Vagina (tissue), 2 donors: ENCODE measurements at regions of chr21 and their contacts with region 1.

Region 1: DNA sequence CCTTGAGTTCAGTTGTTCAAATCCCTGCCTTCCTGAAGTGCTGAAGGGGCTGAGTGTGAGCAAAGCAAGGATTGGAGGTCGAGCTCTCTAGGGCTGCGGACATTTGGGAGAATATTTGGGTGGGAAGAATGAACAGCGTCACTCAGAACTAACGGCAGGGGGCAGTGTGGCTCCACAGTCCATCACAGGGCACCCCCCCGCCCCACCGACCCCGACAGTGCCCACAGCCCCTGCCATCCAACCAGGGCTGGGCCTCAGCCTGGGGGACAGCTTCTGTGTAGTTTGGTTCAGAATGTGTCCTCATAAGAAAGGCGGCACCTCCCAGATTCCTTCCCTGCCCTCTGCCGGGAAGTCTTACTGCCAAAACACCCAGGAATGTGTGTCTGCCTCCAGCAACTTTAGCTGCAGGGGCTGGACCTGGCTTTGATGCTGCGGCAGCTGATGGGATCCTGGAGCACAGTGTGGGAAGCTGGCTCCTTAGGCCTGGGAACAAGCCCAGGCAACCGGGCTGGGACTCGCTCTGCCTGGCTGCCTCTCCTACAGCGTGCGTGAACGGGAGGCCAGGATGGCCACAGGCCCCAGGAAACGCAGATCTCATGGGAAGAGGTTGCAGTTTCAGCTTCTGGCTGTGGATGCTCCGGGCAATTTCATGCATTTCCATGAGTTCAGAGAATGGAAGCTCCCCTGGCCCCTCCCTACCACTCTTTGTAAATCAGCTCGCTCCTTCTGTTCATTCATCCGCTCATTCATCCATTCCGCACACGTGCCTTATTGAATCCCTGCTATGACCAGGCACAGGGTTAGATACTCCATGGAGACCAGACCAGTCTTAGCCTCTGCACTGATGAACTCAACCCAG is 104.9 kb upstream of the TMPRSS2 start:
- DNase-seq: peak in 1 of 2 donors; percentile 97
- H3K4me3 ChIP-seq: peak overlapping the region in 1 of 2 donors; percentile 4
- H3K27ac ChIP-seq: peak overlapping the region; percentile 77
- H3K4me1 ChIP-seq: peaks cover 51% of the 10 kb centered on the region
- H3K27me3 ChIP-seq: no peaks in the 10 kb centered on the region
- CTCF ChIP-seq: peak; percentile 53 to 89 (median 81)
- POLR2A ChIP-seq: no peak

Region 2: GRCh38 chr21:41564871-41565274 is 48.0 kb before region 1 on chr21:
- intact Hi-C with region 1: no loop called
- DNase-seq: no peak
- H3K4me3 ChIP-seq: no peak overlapping the region
- H3K27ac ChIP-seq: no peak overlapping the region
- H3K4me1 ChIP-seq: no peaks in the 10 kb centered on the region
- H3K27me3 ChIP-seq: no peaks in the 10 kb centered on the region
- CTCF ChIP-seq: no peak
- POLR2A ChIP-seq: no peak

Region 3: DNA sequence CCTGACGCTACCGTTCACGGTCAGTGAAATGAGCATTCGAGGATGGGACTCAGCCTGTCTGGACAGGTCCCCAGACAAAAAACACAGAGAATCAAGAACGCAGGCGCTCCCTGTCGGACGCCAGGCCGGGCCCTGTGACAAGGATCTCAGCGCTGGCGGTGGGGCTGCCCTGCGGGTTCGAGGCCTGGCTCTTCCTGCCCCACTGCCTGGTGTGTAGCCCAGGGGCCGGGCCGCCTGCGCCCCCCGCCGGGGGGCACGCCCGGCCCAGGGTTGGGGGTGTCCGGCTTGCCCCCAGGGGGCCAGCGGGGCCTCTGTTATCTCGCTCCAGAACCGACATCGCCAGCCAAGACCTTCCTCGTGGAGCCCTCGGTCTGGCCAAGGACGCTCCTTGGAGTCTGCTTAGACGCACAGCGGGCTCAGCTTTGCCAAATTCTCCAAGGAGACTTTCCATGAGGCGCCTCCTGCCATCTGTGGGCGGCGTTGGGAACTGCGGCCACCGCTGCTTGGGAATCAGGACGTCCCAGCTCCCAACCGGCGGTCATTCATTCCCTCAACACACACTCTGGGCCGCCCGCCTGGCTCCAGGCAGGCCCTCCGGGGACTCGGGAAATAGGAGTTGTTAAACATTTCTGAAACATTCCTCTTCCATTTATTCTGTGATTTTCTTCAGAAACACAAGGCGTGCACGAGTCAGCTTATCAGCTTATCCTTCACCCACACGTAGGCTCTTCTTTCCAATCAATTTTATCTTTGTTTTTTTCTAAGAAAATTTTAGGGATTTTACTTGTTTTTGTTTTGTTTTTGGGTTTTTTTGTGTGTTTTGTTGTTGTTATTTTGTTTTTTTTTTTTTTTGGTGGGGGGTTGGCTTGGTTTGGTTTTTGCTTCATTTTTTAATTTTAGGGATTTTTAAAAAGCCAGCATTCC is 165.3 kb after region 1 on chr21:
- intact Hi-C with region 1: loop called (anchors 1 kb)
- DNase-seq: no peak
- H3K4me3 ChIP-seq: no peak overlapping the region
- H3K27ac ChIP-seq: peak overlapping the region; percentile 31
- H3K4me1 ChIP-seq: peaks cover 10% of the 10 kb centered on the region
- H3K27me3 ChIP-seq: no peaks in the 10 kb centered on the region
- CTCF ChIP-seq: peak; percentile 66 to 80 (median 79)
- POLR2A ChIP-seq: no peak

Region 4: GRCh38 chr21:41879190-41879998 is 266.5 kb after region 1 on chr21 and contains the start of gene PRDM15:
- intact Hi-C with region 1: loop called (anchors 2 kb)
- DNase-seq: no peak
- H3K4me3 ChIP-seq: peak within 1 kb of the TSS; percentile 81 to 88
- H3K27ac ChIP-seq: peak within 1 kb of the TSS; percentile 77
- H3K4me1 ChIP-seq: peaks cover 15% of the 10 kb centered on the region
- H3K27me3 ChIP-seq: no peaks in the 10 kb centered on the region
- CTCF ChIP-seq: no peak
- POLR2A ChIP-seq: no peak
- total RNA-seq, gene PRDM15: 31.2 TPM

Region 5: DNA sequence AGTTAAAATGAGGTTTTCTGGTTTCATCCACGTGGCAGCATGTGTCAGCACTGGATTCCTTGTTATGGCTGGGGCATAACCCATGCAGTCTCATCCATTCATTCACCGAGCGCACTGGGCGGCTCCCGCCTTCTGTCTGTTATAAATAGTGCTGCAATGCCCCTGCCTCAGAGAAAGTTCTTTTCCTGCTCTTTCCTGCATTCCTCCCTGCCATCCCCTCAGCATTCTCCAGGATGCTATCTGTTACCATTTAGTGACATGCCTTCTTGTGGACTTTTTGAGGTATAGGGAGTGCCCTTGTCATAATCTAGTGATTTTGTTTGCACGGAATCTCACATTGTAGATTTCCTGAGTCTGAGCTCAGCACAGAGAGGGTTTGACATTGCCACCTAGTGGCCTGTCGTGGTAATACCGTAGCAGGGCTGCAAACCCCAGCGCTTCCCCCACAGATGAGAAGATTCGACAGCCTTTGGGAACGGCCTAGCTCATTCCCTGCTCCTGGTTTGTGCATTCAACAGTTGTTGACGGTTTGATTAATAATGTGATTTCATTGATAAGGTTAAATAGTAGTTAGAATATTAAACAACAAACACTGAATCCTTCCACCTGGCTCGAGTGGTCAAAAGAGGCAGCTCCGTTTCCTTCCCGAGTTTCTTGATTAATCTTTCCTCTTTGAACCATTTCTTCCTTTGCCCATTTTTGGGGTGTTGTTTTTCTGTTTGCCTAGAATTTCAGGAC is 504.5 kb after region 1 on chr21:
- intact Hi-C with region 1: loop called (anchors 10 kb)
- DNase-seq: no peak
- H3K4me3 ChIP-seq: no peak overlapping the region
- H3K27ac ChIP-seq: peak overlapping the region; percentile 21
- H3K4me1 ChIP-seq: peaks cover 18% of the 10 kb centered on the region
- H3K27me3 ChIP-seq: no peaks in the 10 kb centered on the region
- CTCF ChIP-seq: peak; percentile 78 to 96 (median 93)
- POLR2A ChIP-seq: no peak

Region 6: GRCh38 chr21:43287111-43287759 is 1674.3 kb after region 1 on chr21:
- intact Hi-C with region 1: no loop called
- DNase-seq: no peak
- H3K4me3 ChIP-seq: no peak overlapping the region
- H3K27ac ChIP-seq: no peak overlapping the region
- H3K4me1 ChIP-seq: no peaks in the 10 kb centered on the region
- H3K27me3 ChIP-seq: no peaks in the 10 kb centered on the region
- CTCF ChIP-seq: no peak
- POLR2A ChIP-seq: no peak